ENCODE measurements at regions of chr11 and their contacts with region 1.

Region 1: GRCh38 chr11:40215556-40215955 is 1243.9 kb downstream of the LRRC4C start:
- DNase-seq: no peak
- ATAC-seq: no peak
- H3K4me3 ChIP-seq: no peak overlapping the region
- H3K4me3 Mint-ChIP-seq: no peak overlapping the region
- H3K27ac ChIP-seq: no peak overlapping the region
- H3K27ac Mint-ChIP-seq: no peak overlapping the region
- H3K4me1 ChIP-seq: no peaks in the 10 kb centered on the region
- H3K4me1 Mint-ChIP-seq: no peaks in the 10 kb centered on the region
- H3K27me3 ChIP-seq: no peaks in the 10 kb centered on the region
- H3K27me3 Mint-ChIP-seq: no peaks in the 10 kb centered on the region

Region 2: DNA sequence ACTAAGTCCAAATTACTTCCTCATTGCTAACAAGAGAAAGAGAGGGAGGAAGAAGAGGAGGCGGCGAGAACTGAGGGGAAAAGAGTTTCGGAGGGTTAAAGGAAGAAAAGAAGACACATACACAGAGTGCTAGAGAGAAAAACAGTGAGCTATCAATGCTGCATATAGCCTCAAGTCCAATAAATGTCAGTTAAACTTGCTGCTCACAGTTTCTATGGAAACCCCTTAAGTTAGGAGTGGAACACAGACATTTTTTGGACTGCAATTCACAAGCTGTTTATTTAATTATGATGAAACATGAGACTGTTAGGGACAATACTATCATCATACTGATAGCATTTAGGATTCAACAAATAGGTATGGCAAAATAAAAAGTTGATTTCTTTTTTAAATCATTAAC is 76.5 kb before region 1 on chr11:
- CTCF ChIA-PET with region 1: no interaction called
- POLR2A ChIA-PET with region 1: no interaction called
- intact Hi-C with region 1: no loop called
- DNase-seq: no peak
- ATAC-seq: no peak
- H3K4me3 ChIP-seq: no peak overlapping the region
- H3K4me3 Mint-ChIP-seq: no peak overlapping the region
- H3K27ac ChIP-seq: no peak overlapping the region
- H3K27ac Mint-ChIP-seq: no peak overlapping the region
- H3K4me1 ChIP-seq: no peaks in the 10 kb centered on the region
- H3K4me1 Mint-ChIP-seq: no peaks in the 10 kb centered on the region
- H3K27me3 ChIP-seq: no peaks in the 10 kb centered on the region
- H3K27me3 Mint-ChIP-seq: no peaks in the 10 kb centered on the region

Region 3: GRCh38 chr11:40149721-40150120 is 65.8 kb before region 1 on chr11:
- CTCF ChIA-PET with region 1: no interaction called
- POLR2A ChIA-PET with region 1: no interaction called
- intact Hi-C with region 1: loop called in 1 of 2 experiments (anchors 10 kb)
- DNase-seq: no peak
- ATAC-seq: no peak
- H3K4me3 ChIP-seq: no peak overlapping the region
- H3K4me3 Mint-ChIP-seq: no peak overlapping the region
- H3K27ac ChIP-seq: no peak overlapping the region
- H3K27ac Mint-ChIP-seq: no peak overlapping the region
- H3K4me1 ChIP-seq: no peaks in the 10 kb centered on the region
- H3K4me1 Mint-ChIP-seq: no peaks in the 10 kb centered on the region
- H3K27me3 ChIP-seq: no peaks in the 10 kb centered on the region
- H3K27me3 Mint-ChIP-seq: no peaks in the 10 kb centered on the region

Region 4: DNA sequence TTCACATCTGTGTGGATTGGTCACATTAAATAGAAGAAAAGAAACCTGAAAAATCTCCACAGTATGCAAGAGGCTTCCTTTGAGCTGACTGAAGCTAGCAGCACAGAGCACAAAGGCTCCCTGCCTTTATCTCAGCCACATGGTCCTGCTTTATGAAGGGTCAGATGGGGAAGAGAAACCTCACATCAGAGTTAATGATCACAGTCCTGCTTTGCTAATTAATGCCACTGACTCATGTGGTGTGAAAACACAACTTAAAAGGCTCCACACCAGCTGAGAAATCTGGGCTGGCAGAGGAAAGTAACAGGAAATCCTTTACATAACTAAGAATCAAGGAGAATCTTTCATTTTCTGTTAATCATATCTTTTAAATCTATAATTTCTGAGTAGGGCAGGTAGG is 47.1 kb before region 1 on chr11:
- CTCF ChIA-PET with region 1: no interaction called
- POLR2A ChIA-PET with region 1: no interaction called
- intact Hi-C with region 1: no loop called
- DNase-seq: no peak
- ATAC-seq: no peak
- H3K4me3 ChIP-seq: no peak overlapping the region
- H3K4me3 Mint-ChIP-seq: no peak overlapping the region
- H3K27ac ChIP-seq: no peak overlapping the region
- H3K27ac Mint-ChIP-seq: no peak overlapping the region
- H3K4me1 ChIP-seq: no peaks in the 10 kb centered on the region
- H3K4me1 Mint-ChIP-seq: no peaks in the 10 kb centered on the region
- H3K27me3 ChIP-seq: no peaks in the 10 kb centered on the region
- H3K27me3 Mint-ChIP-seq: no peaks in the 10 kb centered on the region

Measured in naive thymus-derived CD4-positive, alpha-beta T cell (primary cell).